OCI-LY7 (cell line): ENCODE measurements at regions of chr6 and their contacts with region 1.

Region 1: GRCh38 chr6:33248925-33249731 is 22.5 kb downstream of the VPS52 start:
- DNase-seq: peak; percentile 99
- H3K4me3 ChIP-seq: peak overlapping the region; percentile 73
- H3K27ac ChIP-seq: peak overlapping the region; percentile 74
- H3K4me1 ChIP-seq: peaks cover 23% of the 10 kb centered on the region
- CTCF ChIP-seq: no peak

Region 2: DNA sequence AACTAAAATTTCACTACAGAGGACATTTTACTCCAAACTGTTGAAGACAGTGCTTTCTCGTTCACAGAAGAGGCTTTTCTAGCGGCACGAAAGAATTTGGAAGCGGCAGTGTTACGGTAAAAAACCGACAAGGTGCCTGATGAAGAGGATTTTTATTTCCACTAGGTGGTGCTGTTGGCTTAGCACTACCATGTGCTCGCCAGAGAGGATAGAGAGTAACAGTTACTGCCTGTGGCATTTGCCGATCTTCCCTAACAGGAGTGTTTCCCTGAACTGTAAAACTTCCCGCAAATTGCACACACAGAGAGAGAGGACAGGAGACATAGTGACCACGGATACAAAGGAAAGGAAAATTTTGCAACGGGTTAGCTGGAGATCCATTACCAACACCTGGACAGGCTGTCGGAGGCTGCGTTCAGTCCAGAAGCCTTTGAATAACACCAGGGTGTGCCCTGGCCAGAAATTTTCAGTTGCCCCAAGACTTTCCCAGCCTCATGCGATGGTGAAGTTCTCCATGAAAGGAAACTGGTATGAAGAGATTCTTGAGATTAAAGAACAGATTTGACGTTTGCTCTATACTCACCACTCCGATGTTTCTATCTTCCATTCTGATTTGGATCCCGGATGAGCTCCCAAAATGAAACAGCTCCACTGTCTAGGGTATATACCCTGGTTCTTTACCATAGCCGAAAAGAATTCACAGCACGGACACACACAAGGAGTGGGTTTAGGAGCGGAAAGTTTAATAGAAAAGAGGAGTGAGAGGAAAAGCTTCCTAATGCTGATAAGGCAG is 125.2 kb before region 1 on chr6:
- CTCF ChIA-PET with region 1: interaction called, 3 read pairs
- POLR2A ChIA-PET with region 1: interaction called, 3 read pairs
- intact Hi-C with region 1: loop called (anchors 1 kb)
- DNase-seq: peak; percentile 67
- H3K4me3 ChIP-seq: no peak overlapping the region
- H3K27ac ChIP-seq: no peak overlapping the region
- H3K4me1 ChIP-seq: no peaks in the 10 kb centered on the region
- CTCF ChIP-seq: peak; percentile 88

Region 3: GRCh38 chr6:33161354-33162331 is 87.5 kb before region 1 on chr6:
- CTCF ChIA-PET with region 1: no interaction called
- POLR2A ChIA-PET with region 1: no interaction called
- intact Hi-C with region 1: loop called (anchors 1 kb)
- DNase-seq: peak; percentile 71
- H3K4me3 ChIP-seq: peak overlapping the region; percentile 53
- H3K27ac ChIP-seq: no peak overlapping the region
- H3K4me1 ChIP-seq: peaks cover 7% of the 10 kb centered on the region
- CTCF ChIP-seq: peak; percentile 93

Region 4: GRCh38 chr6:33271458-33272274 is 22.5 kb after region 1 on chr6 and contains the starts of genes RPS18 and VPS52:
- CTCF ChIA-PET with region 1: interaction called, 3 read pairs
- POLR2A ChIA-PET with region 1: interaction called, 19 read pairs
- intact Hi-C with region 1: loop called (anchors 1 kb)
- DNase-seq: peak; percentile 99
- H3K4me3 ChIP-seq: peak within 1 kb of the TSS; percentile 97
- H3K27ac ChIP-seq: peak within 1 kb of the TSS; percentile 93
- H3K4me1 ChIP-seq: peaks cover 43% of the 10 kb centered on the region
- CTCF ChIP-seq: no peak; the same call in 1 of the 2 replicates
- total RNA-seq, gene RPS18: 7,191 and 8,620 TPM in 2 replicates
- total RNA-seq, gene VPS52: 50.4 and 53.5 TPM in 2 replicates